ENCODE measurements at regions of chr18 and their contacts with region 1.

Region 1: GRCh38 chr18:3129053-3129864 is 90.5 kb downstream of the MYOM1 start:
- DNase-seq: peak; percentile 90
- ATAC-seq: peak; percentile 100
- H3K4me3 Mint-ChIP-seq: no peak overlapping the region
- H3K27ac Mint-ChIP-seq: peak overlapping the region; percentile 24; the same call in 1 of the 2 replicates
- H3K4me1 Mint-ChIP-seq: peaks cover 9% of the 10 kb centered on the region
- H3K27me3 Mint-ChIP-seq: no peaks in the 10 kb centered on the region
- CTCF ChIP-seq: peak; percentile 77

Region 2: GRCh38 chr18:2948038-2948437 is 181.2 kb before region 1 on chr18:
- CTCF ChIA-PET with region 1: interaction called, 11 read pairs
- POLR2A ChIA-PET with region 1: no interaction called
- DNase-seq: no peak
- ATAC-seq: peak; percentile 62
- H3K4me3 Mint-ChIP-seq: no peak overlapping the region
- H3K27ac Mint-ChIP-seq: no peak overlapping the region
- H3K4me1 Mint-ChIP-seq: no peaks in the 10 kb centered on the region
- H3K27me3 Mint-ChIP-seq: no peaks in the 10 kb centered on the region
- CTCF ChIP-seq: no peak

Region 3: GRCh38 chr18:3100498-3101132 is 28.6 kb before region 1 on chr18:
- CTCF ChIA-PET with region 1: interaction called, 10 read pairs
- POLR2A ChIA-PET with region 1: no interaction called
- DNase-seq: no peak
- ATAC-seq: no peak
- H3K4me3 Mint-ChIP-seq: no peak overlapping the region
- H3K27ac Mint-ChIP-seq: no peak overlapping the region
- H3K4me1 Mint-ChIP-seq: no peaks in the 10 kb centered on the region
- H3K27me3 Mint-ChIP-seq: no peaks in the 10 kb centered on the region; the same call in 1 of the 2 replicates
- CTCF ChIP-seq: no peak

Region 4: GRCh38 chr18:3151399-3152264 is 22.4 kb after region 1 on chr18:
- CTCF ChIA-PET with region 1: interaction called, 19 read pairs
- POLR2A ChIA-PET with region 1: no interaction called
- DNase-seq: no peak
- ATAC-seq: no peak
- H3K4me3 Mint-ChIP-seq: no peak overlapping the region
- H3K27ac Mint-ChIP-seq: no peak overlapping the region
- H3K4me1 Mint-ChIP-seq: no peaks in the 10 kb centered on the region
- H3K27me3 Mint-ChIP-seq: no peaks in the 10 kb centered on the region
- CTCF ChIP-seq: peak; percentile 55

Region 5: GRCh38 chr18:3245853-3246634 is 116.8 kb after region 1 on chr18:
- CTCF ChIA-PET with region 1: interaction called, 19 read pairs
- POLR2A ChIA-PET with region 1: no interaction called
- DNase-seq: peak; percentile 90
- ATAC-seq: peak; percentile 63
- H3K4me3 Mint-ChIP-seq: peak overlapping the region; percentile 96
- H3K27ac Mint-ChIP-seq: peak overlapping the region; percentile 78
- H3K4me1 Mint-ChIP-seq: peaks cover 29% of the 10 kb centered on the region
- H3K27me3 Mint-ChIP-seq: no peaks in the 10 kb centered on the region
- CTCF ChIP-seq: peak; percentile 64

Measured in WTC11 (cell line).